Activated CD4-positive, alpha-beta T cell treated with anti-CD3 and anti-CD28 coated beads, Interleukin-2, amount 10 ng/mL, durations not matched to agents 24 days and 14 days (primary cell): ENCODE measurements at regions of chr11 and their contacts with region 1.

Region 1: GRCh38 chr11:32052218-32052617 is 38.7 kb upstream of the RCN1 start:
- DNase-seq: peak; percentile 86
- H3K4me3 Mint-ChIP-seq: no peak overlapping the region
- H3K27ac Mint-ChIP-seq: no peak overlapping the region
- H3K4me1 Mint-ChIP-seq: no peaks in the 10 kb centered on the region
- H3K27me3 Mint-ChIP-seq: peaks cover 33% of the 10 kb centered on the region

Region 2: GRCh38 chr11:32176223-32176934 is 124.2 kb after region 1 on chr11:
- intact Hi-C with region 1: loop called (anchors 1 kb)
- DNase-seq: peak; percentile 94
- H3K4me3 Mint-ChIP-seq: no peak overlapping the region
- H3K27ac Mint-ChIP-seq: no peak overlapping the region
- H3K4me1 Mint-ChIP-seq: peaks cover 3% of the 10 kb centered on the region
- H3K27me3 Mint-ChIP-seq: peaks cover 16% of the 10 kb centered on the region

Region 3: DNA sequence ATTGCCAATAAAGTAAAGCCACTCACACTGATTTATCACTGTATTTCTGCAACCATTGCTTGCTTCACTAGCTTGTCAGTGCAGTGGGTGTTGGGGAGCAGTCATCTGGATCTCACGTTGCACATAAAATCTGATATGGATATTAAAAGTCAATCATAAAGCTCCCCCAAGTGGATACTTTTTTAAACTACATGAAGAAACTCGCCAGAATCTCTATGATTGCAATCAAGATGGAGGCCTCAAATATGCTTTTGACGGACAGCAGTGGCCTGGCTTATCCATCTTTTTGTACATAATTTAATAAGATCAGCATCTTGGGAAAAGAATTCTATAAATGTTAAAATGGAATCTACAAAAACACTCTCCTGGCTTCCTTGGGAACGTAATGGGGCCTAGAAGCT is 245.4 kb after region 1 on chr11:
- intact Hi-C with region 1: loop called (anchors 1 kb)
- DNase-seq: no peak
- H3K4me3 Mint-ChIP-seq: no peak overlapping the region
- H3K27ac Mint-ChIP-seq: no peak overlapping the region
- H3K4me1 Mint-ChIP-seq: no peaks in the 10 kb centered on the region
- H3K27me3 Mint-ChIP-seq: peaks cover 6% of the 10 kb centered on the region

Region 4: GRCh38 chr11:32902089-32902816 is 850.0 kb after region 1 on chr11:
- intact Hi-C with region 1: no loop called
- DNase-seq: no peak
- H3K4me3 Mint-ChIP-seq: no peak overlapping the region
- H3K27ac Mint-ChIP-seq: no peak overlapping the region
- H3K4me1 Mint-ChIP-seq: peaks cover 25% of the 10 kb centered on the region
- H3K27me3 Mint-ChIP-seq: no peaks in the 10 kb centered on the region